ENCODE measurements at regions of chr12 and their contacts with region 1.

Region 1: GRCh38 chr12:89542912-89543592 is 17.2 kb upstream of the POC1B start:
- DNase-seq: peak; percentile 34 to 68 (median 56)
- H3K4me3 ChIP-seq: no peak overlapping the region
- H3K4me3 Mint-ChIP-seq: no peak overlapping the region
- H3K27ac ChIP-seq: no peak overlapping the region
- H3K27ac Mint-ChIP-seq: peak overlapping the region in 2 of 8 donors; percentile 12 to 39
- H3K4me1 ChIP-seq: peaks cover 6% of the 10 kb centered on the region
- H3K4me1 Mint-ChIP-seq: peaks cover 5 to 7% (median 6%) of the 10 kb centered on the region in 3 donors
- H3K27me3 ChIP-seq: no peaks in the 10 kb centered on the region
- H3K27me3 Mint-ChIP-seq: peaks cover 0 to 2% of the 10 kb centered on the region in 2 donors

Region 2: DNA sequence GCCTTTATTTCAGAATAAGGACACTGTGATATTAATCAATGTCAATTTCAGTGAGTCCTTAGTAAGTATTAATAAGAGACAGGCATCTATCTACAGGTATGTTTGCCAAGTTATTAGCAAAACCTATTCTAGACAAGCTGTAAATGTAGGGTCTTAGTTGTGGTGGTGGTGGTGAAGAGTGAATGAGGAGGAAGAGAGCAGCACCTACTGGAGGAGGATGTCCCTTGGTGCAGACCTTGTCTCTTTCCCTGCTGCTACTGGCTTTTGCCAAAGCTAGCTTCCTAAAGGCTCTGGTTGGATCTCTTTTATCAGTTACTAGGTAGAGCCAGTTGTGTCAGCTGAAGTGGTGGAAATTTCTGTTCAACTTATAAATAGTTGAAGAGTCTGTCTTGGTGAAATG is 470.4 kb after region 1 on chr12:
- CTCF ChIA-PET with region 1: interaction called, 27 read pairs
- POLR2A ChIA-PET with region 1: no interaction called
- DNase-seq: peak in 3 of 5 donors; percentile 16 to 47 (median 23)
- H3K4me3 ChIP-seq: no peak overlapping the region
- H3K4me3 Mint-ChIP-seq: no peak overlapping the region
- H3K27ac ChIP-seq: no peak overlapping the region
- H3K27ac Mint-ChIP-seq: peak overlapping the region in 2 of 8 donors; percentile 30 to 51
- H3K4me1 ChIP-seq: no peaks in the 10 kb centered on the region
- H3K4me1 Mint-ChIP-seq: peaks cover 5 to 15% (median 12%) of the 10 kb centered on the region in 3 donors
- H3K27me3 ChIP-seq: no peaks in the 10 kb centered on the region
- H3K27me3 Mint-ChIP-seq: no peaks in the 10 kb centered on the region

Region 3: DNA sequence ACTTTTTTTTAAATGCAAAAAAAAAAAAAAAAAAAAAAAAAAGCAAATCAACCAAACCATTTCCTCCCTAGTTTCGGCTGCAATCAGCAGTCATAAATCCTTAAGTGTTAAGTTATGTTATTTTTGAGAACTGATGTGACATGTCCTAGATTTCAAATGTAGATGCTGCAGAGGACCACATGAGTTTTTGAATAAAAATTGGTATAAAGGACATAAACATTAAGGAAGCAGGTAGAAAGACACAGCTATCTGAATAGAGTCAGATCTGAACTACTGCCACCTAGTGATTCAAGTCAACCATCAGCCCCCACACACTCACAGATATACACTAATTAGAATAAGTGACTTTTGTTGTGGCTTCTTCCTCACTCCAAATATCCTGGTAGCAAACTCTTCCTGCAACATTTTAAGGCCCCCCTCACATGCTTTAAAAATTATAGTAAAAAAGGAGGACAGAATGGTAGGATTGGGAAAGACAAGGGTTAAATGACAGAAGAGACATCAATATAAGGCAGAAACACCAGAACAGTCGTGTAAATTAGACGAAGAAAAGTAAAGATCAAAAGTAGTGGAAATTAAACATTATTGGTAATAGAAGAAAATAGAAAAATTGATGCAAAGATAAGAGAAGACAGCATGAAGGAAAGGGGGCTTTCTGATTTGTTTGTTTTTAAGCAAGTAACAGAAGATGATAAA is 560.1 kb after region 1 on chr12:
- CTCF ChIA-PET with region 1: interaction called, 50 read pairs
- POLR2A ChIA-PET with region 1: no interaction called
- DNase-seq: peak in 2 of 5 donors; percentile 33
- H3K4me3 ChIP-seq: no peak overlapping the region
- H3K4me3 Mint-ChIP-seq: peak overlapping the region; percentile 40 to 76 (median 71)
- H3K27ac ChIP-seq: no peak overlapping the region
- H3K27ac Mint-ChIP-seq: peak overlapping the region in 2 of 8 donors; percentile 44 to 48
- H3K4me1 ChIP-seq: no peaks in the 10 kb centered on the region
- H3K4me1 Mint-ChIP-seq: peaks cover 8 to 14% (median 12%) of the 10 kb centered on the region in 3 donors
- H3K27me3 ChIP-seq: no peaks in the 10 kb centered on the region
- H3K27me3 Mint-ChIP-seq: peaks cover 2 to 10% of the 10 kb centered on the region in 2 donors

Region 4: GRCh38 chr12:90163975-90164374 is 620.9 kb after region 1 on chr12:
- CTCF ChIA-PET with region 1: interaction called, 11 read pairs
- POLR2A ChIA-PET with region 1: no interaction called
- DNase-seq: no peak
- H3K4me3 ChIP-seq: no peak overlapping the region
- H3K4me3 Mint-ChIP-seq: no peak overlapping the region
- H3K27ac ChIP-seq: no peak overlapping the region
- H3K27ac Mint-ChIP-seq: no peak overlapping the region
- H3K4me1 ChIP-seq: no peaks in the 10 kb centered on the region
- H3K4me1 Mint-ChIP-seq: no peaks in the 10 kb centered on the region
- H3K27me3 ChIP-seq: no peaks in the 10 kb centered on the region
- H3K27me3 Mint-ChIP-seq: peaks cover 0 to 3% of the 10 kb centered on the region in 2 donors